ENCODE measurements at regions of chr12 and their contacts with region 1.

Region 1: DNA sequence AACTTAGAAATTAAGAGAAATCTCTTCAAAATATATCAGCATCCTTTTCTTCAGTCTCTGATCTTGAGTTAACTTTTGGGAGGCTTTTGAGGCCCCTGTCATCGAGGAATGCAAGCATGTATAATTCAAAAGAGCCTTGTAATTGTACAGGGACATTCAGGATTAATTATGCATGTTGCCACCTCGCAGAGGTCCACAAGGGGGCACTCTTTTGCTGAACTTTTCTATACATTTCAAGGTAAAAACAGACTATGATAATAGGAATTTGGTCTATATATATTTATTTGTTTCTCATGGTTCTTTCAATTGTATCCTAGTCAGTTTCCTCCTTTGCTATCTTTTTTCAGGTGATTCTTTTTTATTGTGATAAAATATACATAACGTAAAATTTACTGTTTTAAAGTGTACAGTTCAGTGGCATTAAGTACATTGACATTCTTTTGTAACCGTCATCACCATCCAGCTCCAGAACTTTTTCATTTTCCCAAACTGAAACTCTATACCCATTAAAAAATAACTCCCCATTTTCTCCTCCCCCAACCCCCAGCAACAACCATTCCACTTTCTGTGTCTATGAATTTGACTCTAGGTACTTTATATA is 47.0 kb upstream of the SLC2A13 start:
- DNase-seq: peak; percentile 38
- H3K4me3 ChIP-seq: no peak overlapping the region
- H3K27ac ChIP-seq: no peak overlapping the region
- H3K4me1 ChIP-seq: no peaks in the 10 kb centered on the region
- H3K27me3 ChIP-seq: no peaks in the 10 kb centered on the region
- CTCF ChIP-seq: peak; percentile 32 to 68 (median 66)
- POLR2A ChIP-seq: no peak

Region 2: DNA sequence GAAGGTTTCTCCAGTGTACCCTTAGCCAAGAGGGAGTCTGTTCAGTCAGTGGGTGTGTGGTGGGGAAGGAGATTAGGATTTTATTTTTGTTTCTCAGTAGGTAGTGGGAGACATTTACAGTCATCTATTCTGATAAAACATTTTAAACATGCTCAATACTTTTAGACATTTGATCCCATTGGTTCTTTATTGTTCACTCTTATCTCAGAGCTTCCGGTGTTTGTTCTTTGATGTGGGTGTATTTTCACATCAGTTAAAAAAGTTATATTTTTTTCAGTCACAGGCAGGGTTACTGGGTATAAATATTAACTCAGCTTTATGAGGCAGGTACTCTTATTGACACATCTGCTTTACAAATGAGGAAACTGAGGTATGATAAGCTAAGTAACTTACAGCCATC is 28.6 kb after region 1 on chr12:
- intact Hi-C with region 1: no loop called
- DNase-seq: no peak
- H3K4me3 ChIP-seq: no peak overlapping the region
- H3K27ac ChIP-seq: no peak overlapping the region
- H3K4me1 ChIP-seq: no peaks in the 10 kb centered on the region
- H3K27me3 ChIP-seq: no peaks in the 10 kb centered on the region
- CTCF ChIP-seq: no peak
- POLR2A ChIP-seq: no peak

Region 3: DNA sequence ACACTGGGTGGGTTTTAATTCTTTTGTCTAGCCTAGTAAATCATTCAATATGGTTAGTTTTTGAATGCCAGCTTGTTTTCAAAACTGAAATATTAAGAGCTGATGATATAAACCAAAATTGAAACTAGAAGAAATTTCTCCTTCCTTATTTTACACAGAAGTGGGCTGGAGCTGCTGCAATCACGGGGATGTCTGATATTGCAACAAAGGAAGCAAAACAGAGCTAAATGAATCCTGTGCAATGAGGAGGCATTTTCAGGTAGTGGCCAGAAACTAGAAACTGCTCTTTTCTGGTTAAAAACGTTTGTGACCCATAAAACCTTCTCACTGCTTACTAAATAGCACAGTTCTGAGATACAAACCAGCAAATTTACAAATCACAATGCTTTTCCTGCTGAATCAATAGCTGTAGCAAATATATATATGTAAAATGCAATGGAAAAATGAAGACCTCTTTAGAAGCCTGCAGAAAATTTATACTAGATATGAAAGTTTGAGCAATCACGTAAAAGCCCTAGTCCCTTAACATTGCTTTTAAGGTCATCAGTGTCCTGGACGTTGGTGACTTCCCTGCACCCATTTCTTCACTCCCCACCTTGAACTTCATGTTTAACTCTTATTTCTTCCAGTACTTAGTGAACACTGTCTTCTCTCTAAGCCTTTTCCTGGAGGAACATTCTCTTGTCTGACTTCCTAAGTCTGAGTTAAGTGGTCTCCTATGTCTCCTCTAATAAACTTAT is 56.0 kb after region 1 on chr12:
- intact Hi-C with region 1: no loop called
- DNase-seq: no peak
- H3K4me3 ChIP-seq: no peak overlapping the region
- H3K27ac ChIP-seq: no peak overlapping the region
- H3K4me1 ChIP-seq: no peaks in the 10 kb centered on the region
- H3K27me3 ChIP-seq: no peaks in the 10 kb centered on the region
- CTCF ChIP-seq: no peak
- POLR2A ChIP-seq: no peak

Region 4: DNA sequence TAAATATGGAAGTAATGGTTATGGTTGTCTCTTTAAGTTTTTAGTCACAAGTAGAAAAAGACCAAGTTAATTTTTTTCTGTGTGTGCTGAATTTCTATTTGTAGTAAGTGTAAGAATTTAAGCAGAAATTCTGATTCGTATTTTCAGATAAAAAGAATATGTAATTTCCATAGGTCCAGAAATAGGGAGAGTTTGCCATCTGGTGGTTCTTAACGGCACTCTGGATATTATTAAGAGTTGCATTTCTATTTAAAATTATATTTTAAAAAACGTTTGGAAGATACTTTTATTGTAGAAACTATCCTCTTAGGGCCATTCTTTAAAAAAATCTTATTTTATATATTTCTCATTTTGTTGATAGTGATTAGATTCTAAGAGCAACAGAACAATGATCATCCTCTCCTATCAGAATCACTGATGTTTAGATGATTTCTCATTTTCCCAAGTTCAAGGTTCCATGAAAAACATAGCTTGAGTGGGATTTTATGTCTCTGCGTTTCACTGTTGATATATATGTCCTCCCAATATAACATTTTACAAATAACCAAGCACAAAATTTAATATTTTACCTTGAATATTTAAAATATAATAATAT is 160.2 kb after region 1 on chr12:
- intact Hi-C with region 1: loop called (anchors 5 kb)
- DNase-seq: no peak
- H3K4me3 ChIP-seq: no peak overlapping the region
- H3K27ac ChIP-seq: no peak overlapping the region
- H3K4me1 ChIP-seq: no peaks in the 10 kb centered on the region
- H3K27me3 ChIP-seq: no peaks in the 10 kb centered on the region
- CTCF ChIP-seq: peak in 3 of 4 experiments; percentile 20 to 51 (median 50)
- POLR2A ChIP-seq: no peak